ENCODE measurements at regions of chr11 and their contacts with region 1.

Region 1: GRCh38 chr11:59171508-59172322 is at the start of gene DTX4:
- DNase-seq: peak; percentile 91
- H3K4me3 ChIP-seq: peak within 1 kb of the TSS; percentile 77
- H3K27ac ChIP-seq: peak within 1 kb of the TSS; percentile 79
- H3K4me1 ChIP-seq: peaks cover 33% of the 10 kb centered on the region
- H3K27me3 ChIP-seq: peaks cover 17% of the 10 kb centered on the region
- CTCF ChIP-seq: peak; percentile 83
- total RNA-seq, gene DTX4: 1.8 TPM

Region 2: DNA sequence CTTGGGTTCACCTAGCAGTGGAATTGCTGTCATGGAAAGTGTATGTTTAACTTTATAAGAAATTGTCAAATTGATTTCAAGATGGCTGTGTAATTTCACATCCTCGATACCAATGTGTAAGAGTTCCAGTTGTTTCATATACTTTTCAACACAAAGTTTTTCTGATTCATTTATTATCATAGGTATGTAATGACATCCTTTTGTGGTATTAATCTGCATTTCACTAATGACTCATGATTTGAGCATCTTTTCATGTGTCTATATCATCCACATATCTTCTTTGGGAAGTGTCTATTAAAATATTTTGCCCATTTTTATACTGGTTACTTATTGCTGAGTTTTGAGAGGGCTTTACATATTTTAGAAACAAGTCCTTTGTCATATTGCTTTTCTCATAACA is 102.6 kb before region 1 on chr11:
- intact Hi-C with region 1: no loop called
- DNase-seq: no peak
- H3K4me3 ChIP-seq: no peak overlapping the region
- H3K27ac ChIP-seq: no peak overlapping the region
- H3K4me1 ChIP-seq: no peaks in the 10 kb centered on the region
- H3K27me3 ChIP-seq: peaks cover 62% of the 10 kb centered on the region
- CTCF ChIP-seq: no peak

Region 3: GRCh38 chr11:59207988-59208451 is 36.3 kb after region 1 on chr11:
- intact Hi-C with region 1: loop called (anchors 2 kb)
- DNase-seq: no peak
- H3K4me3 ChIP-seq: peak overlapping the region; percentile 48
- H3K27ac ChIP-seq: peak overlapping the region; percentile 30
- H3K4me1 ChIP-seq: peaks cover 17% of the 10 kb centered on the region
- H3K27me3 ChIP-seq: peaks cover 8% of the 10 kb centered on the region
- CTCF ChIP-seq: peak; percentile 84

Region 4: DNA sequence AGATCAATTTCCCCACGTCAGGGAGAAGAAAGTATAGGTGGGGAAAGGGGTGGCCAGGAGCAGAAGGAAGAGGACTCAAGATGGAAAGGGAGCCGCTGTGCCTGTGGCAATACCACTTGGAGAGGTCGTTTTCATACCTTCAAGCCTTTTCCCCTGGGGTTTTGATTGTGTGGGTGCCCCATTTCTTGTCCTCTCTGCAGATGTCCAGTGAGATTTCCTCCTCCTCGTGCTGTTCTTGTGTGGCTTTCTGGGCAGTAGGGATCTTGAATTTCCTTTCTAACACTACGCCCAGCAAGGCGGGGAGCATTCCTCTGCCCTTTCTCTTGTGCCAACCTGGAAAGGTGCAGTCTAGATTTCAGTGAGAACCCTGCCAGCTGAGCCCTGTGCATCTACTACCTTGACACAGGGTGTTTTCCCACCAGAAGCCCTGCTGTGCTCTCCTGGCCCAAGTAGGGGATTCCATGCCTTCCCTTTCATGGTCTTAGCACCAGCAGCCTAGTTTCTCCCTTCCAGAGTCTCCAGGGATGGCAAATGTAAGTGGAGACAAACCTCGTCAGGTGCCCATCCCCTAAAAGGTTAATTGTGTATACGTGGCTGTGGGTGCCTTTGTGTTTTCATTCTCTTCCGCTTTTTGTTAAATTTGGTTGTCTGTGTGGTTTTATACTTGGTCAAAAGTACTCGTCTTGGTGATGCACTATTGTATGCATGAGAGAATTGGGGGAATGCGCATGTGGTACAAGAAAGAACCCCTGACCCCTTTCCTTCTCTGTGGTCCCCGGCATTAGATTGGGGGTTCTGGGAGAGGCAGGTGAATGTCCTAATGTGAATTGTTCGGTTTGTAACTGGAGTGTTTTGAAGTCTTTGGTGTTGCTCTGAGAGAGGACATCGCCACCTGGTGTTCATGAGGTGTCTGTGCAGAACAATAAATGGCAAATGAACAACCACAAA is 112.4 kb after region 1 on chr11:
- intact Hi-C with region 1: loop called (anchors 5 kb)
- DNase-seq: no peak
- H3K4me3 ChIP-seq: no peak overlapping the region
- H3K27ac ChIP-seq: no peak overlapping the region
- H3K4me1 ChIP-seq: no peaks in the 10 kb centered on the region
- H3K27me3 ChIP-seq: peaks cover 19% of the 10 kb centered on the region
- CTCF ChIP-seq: peak; percentile 89

Region 5: DNA sequence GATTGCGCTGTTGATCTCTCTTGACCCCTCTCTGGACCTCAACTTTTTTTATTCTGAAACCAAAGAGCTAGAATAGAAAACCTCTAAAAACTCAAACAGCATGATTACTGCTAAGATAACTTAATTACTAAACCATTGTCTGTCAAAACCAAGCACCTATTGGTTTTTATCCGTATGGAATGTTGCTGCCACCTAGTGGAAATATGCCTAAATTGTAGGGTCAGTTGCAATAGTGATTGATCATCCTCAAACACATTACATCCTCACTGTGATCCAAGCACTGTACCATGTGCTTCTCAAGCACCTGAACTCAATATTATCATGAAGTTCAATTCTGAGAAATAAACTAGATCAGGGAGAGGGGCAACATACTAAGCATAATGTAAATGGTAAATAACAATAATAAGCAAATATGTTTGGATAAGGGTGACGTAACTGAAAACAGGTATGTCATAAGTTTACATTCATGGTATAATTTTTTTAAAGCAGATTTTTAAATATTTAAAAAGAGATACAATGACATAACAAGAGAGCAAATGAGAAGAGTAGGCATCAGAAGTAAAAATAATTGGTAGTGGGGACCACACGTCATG is 258.3 kb after region 1 on chr11:
- intact Hi-C with region 1: loop called (anchors 10 kb)
- DNase-seq: no peak
- H3K4me3 ChIP-seq: no peak overlapping the region
- H3K27ac ChIP-seq: no peak overlapping the region
- H3K4me1 ChIP-seq: no peaks in the 10 kb centered on the region
- H3K27me3 ChIP-seq: peaks cover 14% of the 10 kb centered on the region
- CTCF ChIP-seq: peak; percentile 67

Measured in left ventricle myocardium inferior (tissue), 1 donor.